ENCODE measurements at regions of chr6 and their contacts with region 1.

Region 1: GRCh38 chr6:46507426-46507825 is 16.2 kb upstream of the RCAN2 start:
- DNase-seq: no peak
- ATAC-seq: no peak
- H3K4me3 ChIP-seq: no peak overlapping the region
- H3K27ac ChIP-seq: peak overlapping the region; percentile 72 to 88 (median 82)
- H3K4me1 ChIP-seq: peaks cover 0 to 83% (median 46%) of the 10 kb centered on the region in 12 donors
- H3K27me3 ChIP-seq: no peaks in the 10 kb centered on the region
- CTCF ChIP-seq: no peak
- POLR2A ChIP-seq: no peak

Region 2: DNA sequence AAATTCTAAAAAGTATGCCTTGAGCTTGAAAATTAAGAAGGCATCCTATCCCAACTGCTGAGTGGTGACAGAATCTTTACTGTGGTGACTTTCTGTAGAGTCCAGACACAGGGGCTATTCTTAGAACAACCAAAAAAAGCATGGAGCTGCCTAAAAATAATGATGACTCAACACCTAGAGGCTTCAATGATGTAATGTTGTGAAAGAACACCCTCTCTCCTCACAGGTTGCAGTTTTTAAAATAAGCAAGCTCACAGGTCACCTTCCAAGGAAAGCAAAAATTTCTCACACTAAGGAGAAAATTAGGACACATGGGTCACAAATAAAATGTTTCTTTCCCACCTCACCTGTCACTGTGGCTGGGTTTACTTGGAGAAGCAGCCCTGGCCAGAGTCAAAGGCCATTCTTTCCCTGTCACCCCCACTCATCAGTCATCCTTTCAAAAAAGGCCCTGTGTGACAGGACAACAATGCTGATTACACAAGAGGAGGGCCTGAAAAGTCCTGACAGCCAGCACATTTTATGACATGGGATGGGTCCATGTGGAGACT is 69.7 kb before region 1 on chr6:
- intact Hi-C with region 1: loop called in 1 of 10 experiments (anchors 5 kb)
- DNase-seq: peak in 2 of 5 donors; percentile 28 to 40
- ATAC-seq: peak; percentile 82 to 93 (median 90)
- H3K4me3 ChIP-seq: no peak overlapping the region
- H3K27ac ChIP-seq: peak overlapping the region; percentile 66 to 96 (median 85)
- H3K4me1 ChIP-seq: peaks cover 0 to 67% (median 43%) of the 10 kb centered on the region in 12 donors
- H3K27me3 ChIP-seq: no peaks in the 10 kb centered on the region
- CTCF ChIP-seq: no peak
- POLR2A ChIP-seq: no peak

Region 3: DNA sequence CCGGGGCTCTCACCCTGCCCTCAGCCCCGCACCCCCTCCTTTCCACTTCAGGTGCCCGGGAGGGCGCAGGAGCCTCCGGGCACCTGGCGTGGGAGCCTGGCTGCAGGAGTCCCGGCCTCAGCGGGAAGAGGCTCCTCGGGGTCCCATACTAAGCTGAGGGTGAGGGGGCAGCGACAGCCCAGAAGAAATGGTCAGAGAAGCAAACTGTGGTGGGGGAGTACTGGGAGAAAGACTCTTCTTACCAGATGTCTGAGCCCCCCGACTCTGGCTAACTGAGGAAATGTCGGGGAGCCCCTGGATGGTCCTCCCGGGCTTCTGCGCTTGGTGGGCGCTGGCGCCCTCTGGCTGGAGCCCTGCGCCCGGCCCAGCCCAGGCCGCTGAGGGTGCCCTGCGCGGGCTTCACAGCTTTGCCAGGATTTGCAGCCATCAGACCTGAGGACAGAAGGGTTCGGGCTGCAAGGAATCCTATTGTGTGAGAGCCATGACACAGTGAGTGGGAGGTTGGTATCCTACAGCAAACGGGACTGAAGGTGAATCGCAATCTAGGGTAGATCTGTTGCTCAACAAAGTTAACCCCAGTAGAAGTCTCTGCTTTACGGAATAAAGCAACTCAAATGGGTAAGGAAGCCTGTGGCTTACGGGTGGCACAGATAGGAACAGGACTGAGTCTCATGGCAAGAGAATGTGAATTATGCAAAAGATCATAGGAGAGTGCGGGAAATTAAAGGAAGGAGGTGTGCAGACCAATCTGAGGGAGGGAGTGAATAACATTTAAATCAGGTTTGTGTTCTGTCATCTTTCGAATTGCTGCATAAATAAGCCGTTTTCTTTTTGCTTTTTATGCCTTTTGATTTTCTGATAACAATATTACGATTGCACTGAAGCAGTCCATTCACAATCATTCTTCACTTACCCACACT is 15.5 kb before region 1 on chr6:
- intact Hi-C with region 1: loop called in 1 of 10 experiments (anchors 2 kb)
- DNase-seq: peak; percentile 66 to 77 (median 77)
- ATAC-seq: peak; percentile 86 to 91 (median 88)
- H3K4me3 ChIP-seq: peak overlapping the region; percentile 43 to 94 (median 72)
- H3K27ac ChIP-seq: peak overlapping the region; percentile 70 to 94 (median 92)
- H3K4me1 ChIP-seq: peaks cover 0 to 37% (median 14%) of the 10 kb centered on the region in 12 donors
- H3K27me3 ChIP-seq: peaks cover 0 to 38% (median 0%) of the 10 kb centered on the region in 9 donors
- CTCF ChIP-seq: peak; percentile 53 to 90 (median 71)
- POLR2A ChIP-seq: no peak